Endothelial cell of umbilical vein (primary cell): ENCODE measurements at regions of chr4 and their contacts with region 1.

Region 1: GRCh38 chr4:6250235-6250983 is 19.2 kb upstream of the WFS1 start:
- DNase-seq: peak; percentile 74
- H3K4me3 ChIP-seq: no peak overlapping the region
- H3K27ac ChIP-seq: no peak overlapping the region
- H3K4me1 ChIP-seq: no peaks in the 10 kb centered on the region
- H3K27me3 ChIP-seq: peaks cover 6 to 8% of the 10 kb centered on the region in 2 experiments
- CTCF ChIP-seq: peak; percentile 61 to 62
- POLR2A ChIP-seq: no peak

Region 2: DNA sequence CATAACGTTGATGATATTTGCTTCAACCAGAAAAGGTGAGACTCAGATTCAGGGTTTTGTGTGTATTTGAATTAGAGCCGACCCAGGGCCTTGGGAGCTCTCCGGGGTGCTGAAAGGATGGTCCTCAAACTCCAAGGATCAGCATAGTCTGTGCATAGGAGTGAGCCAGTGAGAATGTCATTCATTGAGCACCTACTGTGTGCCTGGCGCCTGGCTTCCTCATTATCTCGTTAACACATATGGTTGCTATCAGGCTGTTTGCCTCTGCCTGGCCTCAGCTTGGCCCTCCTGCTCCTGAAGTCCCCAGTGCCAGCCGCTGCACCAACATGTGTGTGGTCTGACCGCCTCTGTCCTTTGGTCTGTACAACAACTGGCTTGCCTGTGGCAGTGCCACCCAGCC is 24.9 kb before region 1 on chr4:
- CTCF ChIA-PET with region 1: interaction called, 11 read pairs
- POLR2A ChIA-PET with region 1: no interaction called
- dilution Hi-C with region 1: no loop called
- intact Hi-C with region 1: no loop called
- DNase-seq: peak; percentile 11
- H3K4me3 ChIP-seq: no peak overlapping the region
- H3K27ac ChIP-seq: no peak overlapping the region
- H3K4me1 ChIP-seq: no peaks in the 10 kb centered on the region
- H3K27me3 ChIP-seq: peaks cover 4 to 5% of the 10 kb centered on the region in 2 experiments
- CTCF ChIP-seq: no peak
- POLR2A ChIP-seq: no peak

Region 3: DNA sequence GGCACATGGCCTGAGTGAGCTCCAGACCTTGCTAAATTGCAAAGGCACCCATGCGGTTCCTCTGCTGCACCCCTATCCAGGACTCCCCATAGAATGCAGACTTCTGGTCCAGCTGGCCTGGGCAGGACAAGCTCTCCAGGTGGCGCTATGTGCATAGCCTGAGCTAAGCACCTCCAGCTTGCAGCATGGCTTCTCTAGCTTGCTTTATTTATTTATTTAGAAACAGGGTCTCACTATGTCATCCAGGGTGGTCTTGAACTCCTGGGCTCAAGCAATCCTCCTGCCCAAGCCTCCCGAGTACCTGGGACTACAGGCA is 13.8 kb after region 1 on chr4:
- CTCF ChIA-PET with region 1: interaction called, 151 read pairs
- POLR2A ChIA-PET with region 1: no interaction called
- dilution Hi-C with region 1: no loop called
- intact Hi-C with region 1: no loop called
- DNase-seq: peak; percentile 69
- H3K4me3 ChIP-seq: no peak overlapping the region
- H3K27ac ChIP-seq: no peak overlapping the region
- H3K4me1 ChIP-seq: no peaks in the 10 kb centered on the region
- H3K27me3 ChIP-seq: peaks cover 11 to 13% of the 10 kb centered on the region in 2 experiments
- CTCF ChIP-seq: peak; percentile 50 to 78
- POLR2A ChIP-seq: no peak

Region 4: DNA sequence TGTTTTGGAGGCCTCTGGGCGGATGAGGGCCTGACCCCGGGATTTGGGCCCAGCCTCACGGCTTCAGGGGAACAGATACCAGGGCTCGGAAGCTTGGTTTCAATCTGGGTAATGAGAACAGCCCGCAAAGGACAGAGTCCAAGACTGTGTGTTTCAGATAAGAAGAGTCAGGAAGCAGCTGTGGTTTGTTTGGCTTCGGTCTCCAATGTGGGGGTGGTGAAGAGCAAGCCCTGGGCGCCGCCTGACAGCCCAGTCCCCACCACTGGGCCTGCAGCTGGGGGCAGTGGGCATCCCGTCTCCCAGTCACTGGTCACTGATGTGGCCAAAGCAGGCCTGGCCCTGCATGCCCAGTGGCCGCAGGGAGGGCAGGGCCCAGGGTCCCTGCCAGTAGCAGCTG is 28.4 kb after region 1 on chr4:
- CTCF ChIA-PET with region 1: interaction called, 13 read pairs
- POLR2A ChIA-PET with region 1: no interaction called
- dilution Hi-C with region 1: no loop called
- intact Hi-C with region 1: no loop called
- DNase-seq: peak; percentile 96
- H3K4me3 ChIP-seq: no peak overlapping the region
- H3K27ac ChIP-seq: peak overlapping the region; percentile 64
- H3K4me1 ChIP-seq: peaks cover 23% of the 10 kb centered on the region
- H3K27me3 ChIP-seq: no peaks in the 10 kb centered on the region
- CTCF ChIP-seq: no peak
- POLR2A ChIP-seq: peak; percentile 76

Region 5: DNA sequence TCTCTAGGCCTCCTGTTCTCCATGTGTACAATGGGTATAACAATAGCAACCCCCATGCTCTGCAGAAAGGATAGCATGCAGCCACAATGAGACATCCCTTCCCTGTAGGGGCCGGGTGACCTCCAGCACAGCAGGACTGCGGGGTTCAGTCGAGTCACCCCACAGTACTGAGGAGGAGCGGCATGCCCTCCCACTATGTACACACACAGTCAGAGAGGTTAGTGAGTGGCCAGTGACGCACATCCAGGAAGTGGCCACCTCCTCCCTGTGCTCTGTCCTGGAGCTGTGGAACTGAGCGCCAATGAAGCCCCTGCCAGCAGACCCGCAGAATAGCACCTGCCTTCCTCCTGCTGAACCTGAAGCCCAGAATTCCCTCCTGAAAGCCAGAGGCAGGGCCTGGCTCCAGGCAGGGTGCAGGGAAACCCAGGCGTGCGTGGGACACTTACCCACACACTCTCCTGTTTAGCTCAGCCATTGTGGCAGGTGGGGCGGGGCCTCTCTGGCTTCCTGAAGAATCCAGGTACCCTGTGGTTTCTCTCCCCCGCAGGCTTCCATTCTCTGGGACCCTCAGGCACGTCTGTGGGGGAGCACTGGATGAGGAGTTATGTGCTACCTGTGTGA is 69.2 kb after region 1 on chr4:
- CTCF ChIA-PET with region 1: interaction called, 808 read pairs
- POLR2A ChIA-PET with region 1: no interaction called
- dilution Hi-C with region 1: no loop called
- intact Hi-C with region 1: no loop called
- DNase-seq: no peak
- H3K4me3 ChIP-seq: no peak overlapping the region
- H3K27ac ChIP-seq: no peak overlapping the region
- H3K4me1 ChIP-seq: peaks cover 3% of the 10 kb centered on the region
- H3K27me3 ChIP-seq: no peaks in the 10 kb centered on the region
- CTCF ChIP-seq: no peak
- POLR2A ChIP-seq: no peak

Region 6: DNA sequence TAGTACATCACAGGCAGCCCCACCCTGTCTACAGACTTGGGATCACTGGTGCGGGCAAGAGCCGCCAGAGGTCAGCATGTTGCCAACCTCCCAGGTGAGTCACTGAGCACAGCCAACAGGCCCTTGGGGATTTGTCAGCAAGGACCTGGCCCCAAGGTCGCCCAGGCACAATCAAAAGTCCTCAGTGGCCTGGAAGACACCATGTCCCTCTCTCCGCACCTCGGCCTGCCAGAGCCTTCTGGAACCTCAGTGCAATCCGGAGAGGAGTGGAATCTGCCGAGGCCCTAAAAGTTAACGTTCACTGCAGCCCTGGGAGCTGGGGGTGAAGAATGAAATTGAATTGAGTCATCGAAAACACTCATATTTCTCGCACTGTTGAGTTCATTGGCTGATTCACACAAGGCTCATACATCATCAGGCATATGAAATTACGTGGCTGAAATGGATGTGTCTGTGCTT is 93.6 kb after region 1 on chr4:
- CTCF ChIA-PET with region 1: interaction called, 20 read pairs
- POLR2A ChIA-PET with region 1: no interaction called
- dilution Hi-C with region 1: no loop called
- intact Hi-C with region 1: no loop called
- DNase-seq: no peak
- H3K4me3 ChIP-seq: no peak overlapping the region
- H3K27ac ChIP-seq: no peak overlapping the region
- H3K4me1 ChIP-seq: no peaks in the 10 kb centered on the region
- H3K27me3 ChIP-seq: no peaks in the 10 kb centered on the region
- CTCF ChIP-seq: no peak
- POLR2A ChIP-seq: no peak

Region 7: GRCh38 chr4:7161721-7162214 is 911.4 kb after region 1 on chr4:
- CTCF ChIA-PET with region 1: no interaction called
- POLR2A ChIA-PET with region 1: no interaction called
- dilution Hi-C with region 1: no loop called
- intact Hi-C with region 1: no loop called
- DNase-seq: no peak
- H3K4me3 ChIP-seq: no peak overlapping the region
- H3K27ac ChIP-seq: no peak overlapping the region
- H3K4me1 ChIP-seq: no peaks in the 10 kb centered on the region
- H3K27me3 ChIP-seq: no peaks in the 10 kb centered on the region
- CTCF ChIP-seq: no peak
- POLR2A ChIP-seq: no peak